ENCODE measurements at regions of chr9 and their contacts with region 1.

Region 1: GRCh38 chr9:37994639-37995347 is 74.2 kb downstream of the SHB start:
- DNase-seq: no peak
- H3K4me3 ChIP-seq: no peak overlapping the region
- H3K27ac ChIP-seq: no peak overlapping the region
- H3K4me1 ChIP-seq: peaks cover 16% of the 10 kb centered on the region
- H3K27me3 ChIP-seq: no peaks in the 10 kb centered on the region
- CTCF ChIP-seq: no peak

Region 2: GRCh38 chr9:38008168-38009034 is 13.6 kb after region 1 on chr9:
- CTCF ChIA-PET with region 1: no interaction called
- dilution Hi-C with region 1: no loop called
- in situ Hi-C with region 1: no loop called
- intact Hi-C with region 1: no loop called
- DNase-seq: peak; percentile 91
- H3K4me3 ChIP-seq: no peak overlapping the region
- H3K27ac ChIP-seq: peak overlapping the region; percentile 88
- H3K4me1 ChIP-seq: peaks cover 46% of the 10 kb centered on the region
- H3K27me3 ChIP-seq: no peaks in the 10 kb centered on the region
- CTCF ChIP-seq: no peak

Region 3: GRCh38 chr9:38035873-38036272 is 41.1 kb after region 1 on chr9:
- CTCF ChIA-PET with region 1: no interaction called
- dilution Hi-C with region 1: no loop called
- in situ Hi-C with region 1: no loop called
- intact Hi-C with region 1: loop called (anchors 5 kb)
- DNase-seq: peak; percentile 71
- H3K4me3 ChIP-seq: no peak overlapping the region
- H3K27ac ChIP-seq: peak overlapping the region; percentile 61
- H3K4me1 ChIP-seq: peaks cover 42% of the 10 kb centered on the region
- H3K27me3 ChIP-seq: no peaks in the 10 kb centered on the region
- CTCF ChIP-seq: no peak

Measured in mammary epithelial cell (primary cell).